ENCODE measurements at regions of chr15 and their contacts with region 1.

Region 1: DNA sequence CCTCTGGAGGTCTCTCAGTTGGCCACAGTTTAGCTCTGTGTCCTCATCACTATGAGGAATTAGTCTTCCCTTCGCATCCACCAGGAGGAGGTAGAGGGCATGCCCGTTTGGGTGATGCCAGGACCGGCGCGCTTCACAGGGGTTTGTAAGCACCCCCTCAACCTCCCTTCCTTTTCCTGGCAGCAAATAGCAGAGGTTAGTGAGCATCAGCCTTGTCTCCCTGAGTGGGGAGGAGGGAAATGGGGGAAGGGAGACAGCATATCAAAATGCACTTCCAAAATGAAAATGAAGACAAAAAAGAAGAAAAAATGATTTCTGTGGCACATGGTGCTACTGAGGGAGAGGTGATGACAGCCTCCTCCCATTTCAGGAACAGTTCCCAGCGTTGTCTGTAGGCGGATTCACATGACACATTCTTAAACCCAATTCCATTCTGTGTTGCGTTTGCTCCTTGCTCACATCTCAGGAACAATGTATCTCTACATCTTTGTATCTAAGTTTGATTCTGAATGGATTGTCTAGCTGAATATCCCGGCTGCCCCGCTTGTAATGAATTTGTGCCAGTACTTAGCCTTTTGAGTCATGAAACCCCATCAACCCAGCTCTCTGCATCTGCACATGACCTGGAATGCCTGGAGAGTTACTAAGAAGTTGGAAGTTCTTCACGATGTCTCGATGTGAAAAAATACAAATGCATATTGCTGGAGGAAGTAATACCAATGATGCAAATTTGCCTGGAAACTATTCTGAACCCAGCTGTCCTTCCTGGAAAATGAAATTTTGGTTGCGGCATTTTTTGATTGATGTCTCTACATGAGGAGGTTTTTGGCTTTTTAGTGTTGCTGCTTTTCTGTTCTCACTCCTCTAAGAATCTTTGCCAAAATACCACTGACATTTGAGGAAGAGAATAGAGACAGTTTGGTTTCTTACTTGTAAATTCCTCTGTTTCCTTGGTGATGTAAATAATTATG is 45.2 kb downstream of the TYRO3 start:
- DNase-seq: peak; percentile 83
- ATAC-seq: peak; percentile 94
- H3K4me3 ChIP-seq: peak overlapping the region; percentile 59
- H3K27ac ChIP-seq: no peak overlapping the region
- H3K4me1 ChIP-seq: peaks cover 17% of the 10 kb centered on the region
- H3K27me3 ChIP-seq: no peaks in the 10 kb centered on the region
- CTCF ChIP-seq: peak; percentile 89

Region 2: DNA sequence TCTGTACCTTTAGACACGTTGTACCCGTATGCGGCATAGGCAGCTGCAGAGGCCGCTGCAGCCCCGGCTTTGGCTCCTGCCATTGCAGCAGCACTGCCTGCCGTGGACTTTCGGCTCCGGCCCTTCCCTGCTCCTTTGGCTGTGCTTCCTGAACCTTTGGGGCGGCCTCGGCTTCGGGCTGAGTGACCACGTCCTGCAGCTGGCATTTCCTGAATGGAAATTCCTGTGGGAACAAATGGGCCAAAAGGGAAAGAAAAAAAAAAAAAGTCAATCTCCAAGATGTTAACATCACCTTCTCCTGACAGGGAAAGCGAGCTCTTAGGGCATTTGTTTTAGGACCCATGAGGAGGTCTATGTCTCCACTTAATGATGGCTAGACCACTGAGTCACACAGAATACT is 621.4 kb before region 1 on chr15:
- CTCF ChIA-PET with region 1: no interaction called
- POLR2A ChIA-PET with region 1: no interaction called
- intact Hi-C with region 1: no loop called
- DNase-seq: no peak
- ATAC-seq: 0 out of 2 replicates have a peak, but pooled peaks have one; percentile 14
- H3K4me3 ChIP-seq: no peak overlapping the region
- H3K27ac ChIP-seq: no peak overlapping the region
- H3K4me1 ChIP-seq: no peaks in the 10 kb centered on the region
- H3K27me3 ChIP-seq: no peaks in the 10 kb centered on the region
- CTCF ChIP-seq: no peak

Region 3: DNA sequence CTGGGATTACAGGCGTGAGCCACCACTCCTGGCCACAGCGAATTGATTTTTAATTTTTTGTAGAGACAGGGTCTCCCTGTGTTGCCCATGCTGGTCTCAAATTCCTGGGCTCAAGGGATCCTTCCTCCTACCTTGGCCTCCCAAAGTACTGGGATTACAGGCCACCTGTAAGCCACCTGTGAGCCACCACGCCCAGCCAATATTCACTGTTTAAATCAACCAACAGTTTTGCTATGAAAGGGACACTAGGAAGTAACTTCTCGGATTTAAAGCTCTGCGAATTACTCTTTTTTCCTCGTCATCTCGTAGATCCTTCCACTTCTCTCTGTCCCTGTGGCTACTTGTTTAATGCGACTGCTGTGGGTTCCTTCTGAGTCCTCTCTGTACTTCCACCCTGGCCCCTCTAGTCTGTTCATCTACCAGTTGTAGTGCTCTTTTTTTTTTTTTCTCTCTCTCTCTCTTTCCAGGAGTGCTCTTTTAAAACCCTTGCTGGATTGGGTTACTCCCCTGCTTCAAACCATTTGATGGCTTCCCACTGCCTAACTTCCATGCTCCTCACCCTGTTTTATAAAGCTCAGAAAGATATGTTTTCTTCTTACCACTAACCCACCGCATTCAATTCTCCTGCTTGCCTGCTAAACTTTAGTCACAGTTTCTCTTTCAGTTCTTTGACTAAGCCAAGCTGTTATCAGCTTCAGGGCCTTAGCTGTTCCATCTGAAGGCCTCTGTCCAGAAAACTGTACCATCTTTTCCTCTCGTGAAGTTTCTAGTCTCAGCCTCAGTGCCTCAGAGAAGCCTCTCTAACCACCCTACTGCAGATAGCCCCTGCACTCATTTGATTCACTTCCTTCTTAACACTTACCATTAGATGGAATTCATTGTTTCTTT is 175.0 kb before region 1 on chr15:
- CTCF ChIA-PET with region 1: no interaction called
- POLR2A ChIA-PET with region 1: no interaction called
- intact Hi-C with region 1: no loop called
- DNase-seq: no peak
- ATAC-seq: no peak
- H3K4me3 ChIP-seq: no peak overlapping the region
- H3K27ac ChIP-seq: no peak overlapping the region
- H3K4me1 ChIP-seq: no peaks in the 10 kb centered on the region
- H3K27me3 ChIP-seq: no peaks in the 10 kb centered on the region
- CTCF ChIP-seq: no peak

Region 4: GRCh38 chr15:41557673-41558399 is 46.4 kb before region 1 on chr15:
- CTCF ChIA-PET with region 1: interaction called, 4 read pairs
- POLR2A ChIA-PET with region 1: no interaction called
- intact Hi-C with region 1: loop called (anchors 1 kb)
- DNase-seq: peak; percentile 69
- ATAC-seq: peak; percentile 50
- H3K4me3 ChIP-seq: peak overlapping the region; percentile 76
- H3K27ac ChIP-seq: peak overlapping the region; percentile 4; the same call in 1 of the 2 replicates
- H3K4me1 ChIP-seq: peaks cover 25% of the 10 kb centered on the region
- H3K27me3 ChIP-seq: no peaks in the 10 kb centered on the region
- CTCF ChIP-seq: peak; percentile 98

Region 5: GRCh38 chr15:41695750-41696426 is 91.7 kb after region 1 on chr15:
- CTCF ChIA-PET with region 1: interaction called, 9 read pairs
- POLR2A ChIA-PET with region 1: no interaction called
- intact Hi-C with region 1: loop called (anchors 1 kb)
- DNase-seq: peak; percentile 68
- ATAC-seq: peak; percentile 52
- H3K4me3 ChIP-seq: no peak overlapping the region
- H3K27ac ChIP-seq: no peak overlapping the region
- H3K4me1 ChIP-seq: peaks cover 15% of the 10 kb centered on the region
- H3K27me3 ChIP-seq: no peaks in the 10 kb centered on the region
- CTCF ChIP-seq: peak; percentile 77

Region 6: GRCh38 chr15:41756198-41756597 is 152.0 kb after region 1 on chr15:
- CTCF ChIA-PET with region 1: no interaction called
- POLR2A ChIA-PET with region 1: no interaction called
- intact Hi-C with region 1: no loop called
- DNase-seq: no peak
- ATAC-seq: no peak
- H3K4me3 ChIP-seq: no peak overlapping the region
- H3K27ac ChIP-seq: no peak overlapping the region
- H3K4me1 ChIP-seq: no peaks in the 10 kb centered on the region
- H3K27me3 ChIP-seq: no peaks in the 10 kb centered on the region
- CTCF ChIP-seq: no peak

Region 7: GRCh38 chr15:41774062-41774881 is 170.0 kb after region 1 on chr15 and contains the start of gene MAPKBP1:
- CTCF ChIA-PET with region 1: interaction called, 14 read pairs
- POLR2A ChIA-PET with region 1: no interaction called
- intact Hi-C with region 1: no loop called
- DNase-seq: peak; percentile 98
- ATAC-seq: peak; percentile 82
- H3K4me3 ChIP-seq: peak within 1 kb of the TSS; percentile 81
- H3K27ac ChIP-seq: peak within 1 kb of the TSS; percentile 46
- H3K4me1 ChIP-seq: peaks cover 51% of the 10 kb centered on the region
- H3K27me3 ChIP-seq: no peaks in the 10 kb centered on the region
- CTCF ChIP-seq: peak; percentile 85
- total RNA-seq, gene MAPKBP1: 23.8 and 29.1 TPM in 2 replicates

Measured in PC-3 (cell line).